ENCODE measurements at regions of chr3 and their contacts with region 1.

Region 1: GRCh38 chr3:101081999-101082398 is 88.8 kb upstream of the ABI3BP start:
- DNase-seq: peak; percentile 64
- ATAC-seq: peak; percentile 77
- H3K4me3 ChIP-seq: no peak overlapping the region
- H3K27ac ChIP-seq: 0 out of 2 replicates have a peak overlapping the region, but pooled peaks have one; percentile 2
- H3K4me1 ChIP-seq: peaks cover 32% of the 10 kb centered on the region
- H3K27me3 ChIP-seq: no peaks in the 10 kb centered on the region
- CTCF ChIP-seq: no peak

Region 2: DNA sequence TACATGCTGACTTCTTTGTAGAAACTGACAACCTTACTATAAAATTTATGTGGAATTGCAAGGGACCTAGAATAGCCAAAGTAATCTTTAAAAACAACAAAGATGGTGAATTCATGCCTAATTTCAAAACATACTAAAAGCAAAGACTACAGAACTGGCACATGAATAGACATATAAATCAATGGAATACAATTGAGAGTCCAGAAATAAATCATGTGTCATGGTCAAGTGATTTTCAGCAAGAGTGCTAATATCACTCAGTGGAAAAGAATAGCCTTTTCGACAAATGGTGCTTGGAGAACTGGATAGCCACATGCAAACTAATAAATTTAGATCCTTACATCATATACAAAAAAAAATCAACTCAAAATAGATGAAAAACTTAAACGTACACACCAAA is 229.7 kb after region 1 on chr3:
- CTCF ChIA-PET with region 1: no interaction called
- POLR2A ChIA-PET with region 1: no interaction called
- intact Hi-C with region 1: loop called (anchors 5 kb)
- DNase-seq: no peak
- ATAC-seq: no peak
- H3K4me3 ChIP-seq: no peak overlapping the region
- H3K27ac ChIP-seq: no peak overlapping the region
- H3K4me1 ChIP-seq: peaks cover 14% of the 10 kb centered on the region
- H3K27me3 ChIP-seq: no peaks in the 10 kb centered on the region
- CTCF ChIP-seq: no peak

Measured in PC-3 (cell line).